Endothelial cell of umbilical vein (primary cell): ENCODE measurements at regions of chr7 and their contacts with region 1.

Region 1: GRCh38 chr7:34928049-34928448 is 109.2 kb downstream of the DPY19L1 start:
- DNase-seq: no peak
- H3K4me3 ChIP-seq: no peak overlapping the region
- H3K27ac ChIP-seq: no peak overlapping the region
- H3K4me1 ChIP-seq: no peaks in the 10 kb centered on the region
- H3K27me3 ChIP-seq: no peaks in the 10 kb centered on the region
- CTCF ChIP-seq: peak; percentile 32 to 44
- POLR2A ChIP-seq: no peak

Region 2: DNA sequence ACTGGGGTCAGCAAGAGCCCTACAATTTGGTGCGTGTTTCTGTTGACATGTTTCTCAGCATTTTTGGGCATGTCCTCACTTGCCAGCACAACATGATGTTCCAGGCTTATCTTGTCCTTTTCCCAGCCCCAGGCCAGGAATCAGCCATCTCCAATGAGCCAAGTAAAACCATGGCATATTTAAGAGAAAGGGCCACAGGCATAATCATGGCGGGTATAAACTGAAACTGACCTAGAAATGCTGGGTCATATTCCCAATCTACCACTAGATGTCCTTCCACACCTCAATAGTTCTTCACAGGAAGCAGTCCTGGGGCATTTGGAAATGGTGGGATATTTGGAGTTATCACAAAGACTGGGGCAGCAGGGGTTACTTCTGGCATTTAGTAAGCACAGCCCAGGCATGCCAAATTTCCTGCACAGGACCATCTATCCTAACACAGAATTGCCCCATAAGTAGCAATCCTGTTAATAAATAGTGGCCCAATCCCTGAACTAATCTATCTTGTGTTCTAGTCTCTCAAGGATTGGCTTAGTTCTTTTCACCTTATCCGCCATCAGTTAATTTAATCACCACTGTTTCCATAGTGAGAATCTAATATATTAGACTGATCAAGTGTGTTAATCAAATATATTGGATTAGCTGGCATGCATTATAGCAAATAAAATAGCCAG is 168.5 kb before region 1 on chr7:
- CTCF ChIA-PET with region 1: no interaction called
- POLR2A ChIA-PET with region 1: no interaction called
- dilution Hi-C with region 1: no loop called
- intact Hi-C with region 1: loop called (anchors 1 kb)
- DNase-seq: peak; percentile 54
- H3K4me3 ChIP-seq: no peak overlapping the region
- H3K27ac ChIP-seq: no peak overlapping the region
- H3K4me1 ChIP-seq: no peaks in the 10 kb centered on the region
- H3K27me3 ChIP-seq: peaks cover 2 to 15% of the 10 kb centered on the region in 2 experiments
- CTCF ChIP-seq: peak; percentile 50 to 54
- POLR2A ChIP-seq: no peak